Activated B cell treated with CpG ODN at 0.5 μM for 24 hours (primary cell): ENCODE measurements at regions of chr5 and their contacts with region 1.

Region 1: GRCh38 chr5:177113566-177114424 is 19.8 kb upstream of the NSD1 start:
- DNase-seq: peak; percentile 73
- ATAC-seq: peak; percentile 62
- H3K4me3 Mint-ChIP-seq: no peak overlapping the region
- H3K27ac Mint-ChIP-seq: no peak overlapping the region
- H3K4me1 Mint-ChIP-seq: peaks cover 20% of the 10 kb centered on the region
- H3K27me3 Mint-ChIP-seq: no peaks in the 10 kb centered on the region
- CTCF ChIP-seq: no peak

Region 2: DNA sequence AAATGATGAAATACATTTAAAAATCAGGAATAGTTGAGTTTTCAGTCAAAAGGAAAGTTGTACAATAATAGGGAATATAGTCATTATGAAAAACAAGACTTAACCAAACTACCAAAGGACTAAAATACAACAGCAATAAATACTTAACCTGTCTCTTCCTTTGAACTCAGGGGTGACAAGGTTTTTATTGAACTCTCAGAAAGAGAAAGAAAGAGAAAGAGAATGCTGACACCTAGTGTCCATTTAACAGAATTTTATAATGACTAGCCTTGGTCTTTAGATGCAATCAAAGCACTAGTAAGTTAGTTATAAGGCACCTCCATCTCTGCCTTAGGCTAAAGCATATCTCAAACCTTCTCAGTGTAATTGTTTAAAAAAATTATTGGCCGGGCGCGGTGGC is 154.7 kb before region 1 on chr5:
- CTCF ChIA-PET with region 1: interaction called, 4 read pairs
- POLR2A ChIA-PET with region 1: no interaction called
- intact Hi-C with region 1: loop called (anchors 5 kb)
- DNase-seq: no peak
- ATAC-seq: peak; percentile 28
- H3K4me3 Mint-ChIP-seq: no peak overlapping the region
- H3K27ac Mint-ChIP-seq: no peak overlapping the region
- H3K4me1 Mint-ChIP-seq: no peaks in the 10 kb centered on the region
- H3K27me3 Mint-ChIP-seq: no peaks in the 10 kb centered on the region
- CTCF ChIP-seq: no peak

Region 3: DNA sequence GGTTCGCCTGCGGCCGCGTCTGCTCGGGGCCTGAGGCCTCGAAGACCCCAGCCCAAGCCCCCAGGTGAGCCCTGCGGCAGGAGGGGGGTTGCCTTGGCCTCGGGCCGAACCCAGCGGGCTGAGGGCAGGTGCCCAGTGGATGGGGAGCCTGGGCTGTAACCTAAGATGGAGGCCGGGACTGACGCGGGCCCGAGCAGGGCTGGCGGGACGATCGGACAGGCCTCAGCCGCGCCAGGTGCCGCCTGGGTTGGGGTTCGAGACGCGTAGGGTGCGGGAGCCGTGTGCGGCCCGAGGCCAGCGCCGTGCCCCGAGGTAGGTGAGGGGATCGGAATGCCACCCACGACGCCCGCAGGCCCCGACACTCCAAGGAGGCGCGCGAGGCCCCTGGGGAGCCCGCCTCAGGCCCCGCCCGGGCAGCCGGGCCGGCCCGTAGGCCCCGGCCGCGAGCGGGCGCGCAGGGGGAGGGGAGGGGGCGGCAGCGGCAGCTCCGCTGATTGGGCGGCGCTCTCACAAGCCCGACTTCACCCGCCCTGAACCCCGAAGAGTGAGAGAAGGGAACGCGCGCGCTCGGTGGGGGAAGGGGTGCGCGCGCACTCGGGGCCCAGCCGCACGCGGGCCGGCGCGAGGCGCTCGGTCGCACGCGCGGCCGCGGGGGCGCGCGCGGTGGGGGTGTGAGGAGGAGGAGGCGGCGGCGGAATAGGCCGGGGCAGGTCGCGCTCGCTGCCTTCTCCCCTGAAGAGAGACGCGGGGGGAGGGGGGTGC is 19.5 kb after region 1 on chr5 and contains the start of gene NSD1:
- CTCF ChIA-PET with region 1: interaction called, 6 read pairs
- POLR2A ChIA-PET with region 1: interaction called, 23 read pairs
- intact Hi-C with region 1: loop called (anchors 1 kb)
- DNase-seq: peak; percentile 92
- ATAC-seq: peak; percentile 74
- H3K4me3 Mint-ChIP-seq: peak within 1 kb of the TSS; percentile 85
- H3K27ac Mint-ChIP-seq: peak within 1 kb of the TSS; percentile 87
- H3K4me1 Mint-ChIP-seq: peaks cover 52% of the 10 kb centered on the region
- H3K27me3 Mint-ChIP-seq: no peaks in the 10 kb centered on the region
- CTCF ChIP-seq: no peak
- total RNA-seq, gene NSD1: 103 and 108 TPM in 2 replicates

Region 4: DNA sequence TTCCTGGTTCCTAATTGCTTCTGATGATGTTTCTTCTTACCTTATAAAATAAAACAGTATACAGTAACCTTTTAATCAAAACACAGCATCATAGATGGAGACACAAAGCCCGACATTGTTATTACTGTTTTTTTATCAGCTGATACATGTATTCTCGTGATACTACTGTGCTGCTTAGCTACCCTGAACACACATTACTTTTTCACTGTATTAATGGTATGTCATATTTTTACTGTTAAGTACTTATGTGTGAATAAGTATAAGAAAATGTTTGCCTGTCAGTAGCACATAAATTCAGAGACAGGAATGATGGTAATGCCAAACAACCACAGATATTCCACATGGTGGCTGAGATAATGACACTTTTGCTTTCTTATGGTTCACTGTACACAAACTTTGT is 121.0 kb after region 1 on chr5:
- CTCF ChIA-PET with region 1: interaction called, 4 read pairs
- POLR2A ChIA-PET with region 1: no interaction called
- intact Hi-C with region 1: loop called (anchors 5 kb)
- DNase-seq: no peak
- ATAC-seq: no peak
- H3K4me3 Mint-ChIP-seq: no peak overlapping the region
- H3K27ac Mint-ChIP-seq: no peak overlapping the region
- H3K4me1 Mint-ChIP-seq: peaks cover 6% of the 10 kb centered on the region
- H3K27me3 Mint-ChIP-seq: no peaks in the 10 kb centered on the region
- CTCF ChIP-seq: no peak

Region 5: GRCh38 chr5:177276886-177277285 is 163.1 kb after region 1 on chr5:
- CTCF ChIA-PET with region 1: no interaction called
- POLR2A ChIA-PET with region 1: no interaction called
- intact Hi-C with region 1: no loop called
- DNase-seq: no peak
- ATAC-seq: no peak
- H3K4me3 Mint-ChIP-seq: no peak overlapping the region
- H3K27ac Mint-ChIP-seq: no peak overlapping the region
- H3K4me1 Mint-ChIP-seq: peaks cover 6% of the 10 kb centered on the region
- H3K27me3 Mint-ChIP-seq: no peaks in the 10 kb centered on the region
- CTCF ChIP-seq: no peak

Region 6: DNA sequence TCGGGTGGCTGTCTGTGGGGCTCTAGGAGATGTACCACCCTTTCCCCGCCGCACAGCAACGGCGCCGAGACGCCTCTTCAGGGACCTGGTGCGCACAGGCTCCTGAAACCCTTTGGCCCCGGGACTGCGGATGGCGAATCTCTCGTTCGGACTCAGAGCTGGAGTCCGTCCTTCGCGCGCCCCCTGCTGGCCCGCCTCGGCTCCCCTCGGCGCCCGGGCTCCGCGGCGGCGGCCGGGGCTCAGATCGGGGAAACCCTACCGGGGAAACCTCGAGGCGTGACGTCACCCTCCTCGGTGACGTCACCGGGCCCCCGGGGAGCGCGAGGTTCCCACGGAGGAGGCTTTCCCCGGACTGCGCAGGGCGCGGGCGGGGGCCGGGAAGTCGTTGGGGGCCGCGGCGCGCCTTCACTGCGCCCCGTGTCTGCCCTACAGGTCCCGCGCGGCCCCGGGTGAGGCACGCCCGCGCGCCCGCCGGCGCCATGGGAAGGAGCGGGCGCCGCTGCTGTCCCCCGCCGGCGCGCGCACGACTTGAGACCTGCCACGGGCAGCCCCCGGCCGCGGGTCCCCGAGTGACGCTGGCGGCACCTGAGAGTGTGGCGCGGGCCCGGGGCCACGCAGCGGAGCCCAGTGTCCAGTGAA is 340.7 kb after region 1 on chr5:
- CTCF ChIA-PET with region 1: interaction called, 3 read pairs
- POLR2A ChIA-PET with region 1: no interaction called
- intact Hi-C with region 1: loop called (anchors 2 kb)
- DNase-seq: peak; percentile 97
- ATAC-seq: peak; percentile 48
- H3K4me3 Mint-ChIP-seq: peak overlapping the region; percentile 91
- H3K27ac Mint-ChIP-seq: peak overlapping the region; percentile 12
- H3K4me1 Mint-ChIP-seq: peaks cover 28% of the 10 kb centered on the region
- H3K27me3 Mint-ChIP-seq: no peaks in the 10 kb centered on the region
- CTCF ChIP-seq: no peak